Mammary epithelial cell (primary cell): ENCODE measurements at regions of chr1 and their contacts with region 1.

Region 1: GRCh38 chr1:46197964-46198811 is at the start of gene POMGNT1:
- DNase-seq: peak; percentile 71
- H3K4me3 ChIP-seq: peak within 1 kb of the TSS; percentile 79 to 92 (median 91)
- H3K27ac ChIP-seq: peak within 1 kb of the TSS; percentile 69
- H3K4me1 ChIP-seq: peaks cover 19% of the 10 kb centered on the region
- H3K27me3 ChIP-seq: no peaks in the 10 kb centered on the region
- CTCF ChIP-seq: peak in 1 of 2 donors; percentile 38
- total RNA-seq, gene POMGNT1: 92.5 to 144 TPM

Region 2: DNA sequence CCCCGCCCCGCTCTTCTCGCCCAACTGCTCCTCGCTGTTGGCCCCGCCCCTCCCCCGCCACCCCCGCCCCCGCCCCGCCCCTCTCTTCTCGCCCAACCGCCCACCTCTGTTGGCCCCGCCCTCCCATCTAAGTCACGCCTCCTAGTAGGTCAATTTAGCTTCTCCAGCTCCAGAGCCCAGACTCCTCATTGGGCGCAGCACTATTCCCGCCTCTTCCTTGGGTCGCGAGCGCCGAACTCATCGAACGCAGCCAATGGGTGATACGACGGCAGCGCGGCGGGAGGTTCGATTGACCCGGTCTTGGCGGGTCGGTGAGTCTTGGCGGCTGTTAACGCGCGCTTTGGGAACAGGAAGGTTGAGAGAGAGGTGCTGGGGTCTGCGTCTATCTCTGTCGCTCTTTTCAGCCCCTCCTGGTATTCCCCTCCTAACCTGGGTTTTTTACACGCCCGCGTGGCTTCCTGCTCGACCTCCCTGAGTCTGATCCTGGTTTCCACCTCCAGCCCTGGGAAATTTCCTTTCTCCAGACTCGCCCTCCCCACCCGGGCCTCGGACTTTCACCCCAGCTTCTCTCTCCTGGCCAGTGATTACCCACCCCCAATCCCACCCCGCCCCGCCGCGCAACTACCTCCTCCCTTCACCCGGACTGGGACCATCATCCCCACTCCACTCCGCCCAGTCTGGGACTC is 49.4 kb after region 1 on chr1 and contains the start of gene RAD54L:
- CTCF ChIA-PET with region 1: no interaction called
- dilution Hi-C with region 1: no loop called
- in situ Hi-C with region 1: no loop called
- intact Hi-C with region 1: loop called (anchors 5 kb)
- DNase-seq: peak; percentile 99
- H3K4me3 ChIP-seq: peak within 1 kb of the TSS; percentile 75 to 88 (median 81)
- H3K27ac ChIP-seq: peak within 1 kb of the TSS; percentile 73
- H3K4me1 ChIP-seq: peaks cover 16% of the 10 kb centered on the region
- H3K27me3 ChIP-seq: no peaks in the 10 kb centered on the region
- CTCF ChIP-seq: no peak
- total RNA-seq, gene RAD54L: 1.2 to 14.3 TPM

Region 3: DNA sequence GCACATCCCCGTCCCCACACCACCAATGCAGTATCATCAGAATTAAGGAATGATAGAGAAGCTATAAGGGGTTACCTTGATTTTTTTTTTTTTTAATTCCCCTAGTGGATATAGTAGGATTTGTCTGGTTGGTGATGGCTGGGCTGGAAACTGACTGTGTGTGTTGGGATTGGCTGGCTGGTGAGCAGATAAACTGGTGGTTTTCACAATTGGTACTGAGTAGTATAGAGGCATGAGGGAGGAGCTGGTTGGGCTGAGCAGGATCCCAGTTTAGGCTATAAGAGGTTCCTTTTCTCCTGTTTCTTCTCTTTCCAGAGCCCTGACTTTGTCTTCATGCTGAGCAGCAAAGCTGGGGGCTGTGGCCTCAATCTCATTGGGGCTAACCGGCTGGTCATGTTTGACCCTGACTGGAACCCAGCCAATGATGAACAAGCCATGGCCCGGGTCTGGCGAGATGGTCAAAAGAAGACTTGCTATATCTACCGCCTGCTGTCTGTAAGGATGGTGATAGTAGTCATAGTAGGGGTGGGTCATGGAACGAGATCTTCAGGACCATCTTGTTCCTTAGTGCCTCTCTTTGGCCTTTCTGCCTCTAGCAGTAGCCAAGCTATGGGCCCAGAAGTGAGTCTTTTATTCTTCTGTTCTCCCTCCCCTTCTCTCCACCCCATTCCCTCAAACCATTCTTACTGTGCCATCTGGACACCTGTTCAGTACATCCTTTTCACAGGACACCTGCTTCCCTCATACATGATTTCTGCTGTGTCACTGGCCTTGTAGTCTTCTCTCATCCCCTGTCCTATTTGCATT is 76.2 kb after region 1 on chr1:
- CTCF ChIA-PET with region 1: no interaction called
- dilution Hi-C with region 1: loop called (anchors 5 kb)
- in situ Hi-C with region 1: no loop called
- intact Hi-C with region 1: no loop called
- DNase-seq: no peak
- H3K4me3 ChIP-seq: no peak overlapping the region
- H3K27ac ChIP-seq: no peak overlapping the region
- H3K4me1 ChIP-seq: no peaks in the 10 kb centered on the region
- H3K27me3 ChIP-seq: no peaks in the 10 kb centered on the region
- CTCF ChIP-seq: no peak